ENCODE measurements at regions of chr2 and their contacts with region 1.

Region 1: DNA sequence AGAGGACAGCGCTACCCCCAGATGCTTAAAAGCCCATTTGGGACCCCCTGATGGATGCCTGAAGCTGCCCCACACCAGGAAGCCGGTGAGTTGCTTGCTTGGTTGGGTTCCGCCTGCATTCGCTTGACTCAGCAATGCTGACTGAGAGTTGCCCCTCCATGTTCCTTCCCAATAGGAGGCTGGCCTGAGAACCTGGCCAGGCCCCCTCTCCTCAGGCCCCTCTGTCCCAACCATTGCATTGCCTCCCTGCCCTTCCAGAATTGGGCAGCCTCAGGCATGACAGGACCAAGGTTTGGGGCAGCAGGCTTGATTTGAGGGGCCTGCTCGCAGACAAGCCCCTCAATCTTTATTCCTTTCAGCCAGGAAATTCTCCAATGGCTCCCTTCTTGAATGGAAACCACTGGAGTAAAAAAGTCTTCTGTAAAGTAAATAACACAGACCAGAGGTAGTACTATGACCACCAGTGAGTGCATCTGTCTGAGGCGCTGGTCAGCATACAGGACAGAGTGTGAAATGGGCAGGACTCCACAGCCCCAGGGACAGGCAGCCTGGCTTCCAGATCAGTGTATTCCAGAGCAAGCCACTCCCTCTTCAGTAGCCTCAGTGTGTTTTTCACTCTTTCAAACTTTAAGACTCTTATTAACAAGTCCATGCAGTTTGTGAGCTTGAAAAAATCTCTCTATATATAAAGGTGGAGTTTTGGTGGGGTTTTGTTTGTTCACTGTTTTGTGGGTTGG is 104.7 kb downstream of the C1QL2 start:
- DNase-seq: no peak
- H3K4me3 ChIP-seq: no peak overlapping the region
- H3K27ac ChIP-seq: no peak overlapping the region
- H3K4me1 ChIP-seq: no peaks in the 10 kb centered on the region
- H3K27me3 ChIP-seq: no peaks in the 10 kb centered on the region
- CTCF ChIP-seq: no peak
- POLR2A ChIP-seq: no peak

Region 2: GRCh38 chr2:118449052-118449800 is 604.6 kb before region 1 on chr2:
- intact Hi-C with region 1: no loop called
- DNase-seq: no peak
- H3K4me3 ChIP-seq: no peak overlapping the region
- H3K27ac ChIP-seq: no peak overlapping the region
- H3K4me1 ChIP-seq: no peaks in the 10 kb centered on the region
- H3K27me3 ChIP-seq: no peaks in the 10 kb centered on the region
- CTCF ChIP-seq: no peak
- POLR2A ChIP-seq: no peak

Region 3: DNA sequence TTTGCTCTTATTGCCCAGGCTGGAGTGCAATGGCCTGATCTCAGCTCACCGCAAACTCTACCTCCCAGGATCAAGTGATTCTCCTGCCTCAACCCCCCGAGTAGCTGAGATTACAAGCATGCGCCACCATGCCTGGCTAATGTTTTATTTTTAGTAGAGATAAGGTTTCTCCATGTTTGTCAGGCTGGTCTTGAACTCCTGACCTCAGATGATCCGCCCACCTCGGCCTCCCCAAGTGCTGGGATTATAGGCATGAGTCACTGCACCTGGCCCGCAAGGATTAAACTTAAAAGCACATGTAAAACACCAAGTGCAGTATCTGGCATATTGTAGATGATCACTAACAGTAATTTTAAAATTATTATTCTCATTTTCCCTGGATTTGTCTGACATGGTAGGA is 31.7 kb after region 1 on chr2:
- intact Hi-C with region 1: loop called (anchors 2 kb)
- DNase-seq: no peak
- H3K4me3 ChIP-seq: no peak overlapping the region
- H3K27ac ChIP-seq: no peak overlapping the region
- H3K4me1 ChIP-seq: no peaks in the 10 kb centered on the region
- H3K27me3 ChIP-seq: no peaks in the 10 kb centered on the region
- CTCF ChIP-seq: no peak
- POLR2A ChIP-seq: no peak